CD4-positive, alpha-beta memory T cell (primary cell): ENCODE measurements at regions of chr4 and their contacts with region 1.

Region 1: DNA sequence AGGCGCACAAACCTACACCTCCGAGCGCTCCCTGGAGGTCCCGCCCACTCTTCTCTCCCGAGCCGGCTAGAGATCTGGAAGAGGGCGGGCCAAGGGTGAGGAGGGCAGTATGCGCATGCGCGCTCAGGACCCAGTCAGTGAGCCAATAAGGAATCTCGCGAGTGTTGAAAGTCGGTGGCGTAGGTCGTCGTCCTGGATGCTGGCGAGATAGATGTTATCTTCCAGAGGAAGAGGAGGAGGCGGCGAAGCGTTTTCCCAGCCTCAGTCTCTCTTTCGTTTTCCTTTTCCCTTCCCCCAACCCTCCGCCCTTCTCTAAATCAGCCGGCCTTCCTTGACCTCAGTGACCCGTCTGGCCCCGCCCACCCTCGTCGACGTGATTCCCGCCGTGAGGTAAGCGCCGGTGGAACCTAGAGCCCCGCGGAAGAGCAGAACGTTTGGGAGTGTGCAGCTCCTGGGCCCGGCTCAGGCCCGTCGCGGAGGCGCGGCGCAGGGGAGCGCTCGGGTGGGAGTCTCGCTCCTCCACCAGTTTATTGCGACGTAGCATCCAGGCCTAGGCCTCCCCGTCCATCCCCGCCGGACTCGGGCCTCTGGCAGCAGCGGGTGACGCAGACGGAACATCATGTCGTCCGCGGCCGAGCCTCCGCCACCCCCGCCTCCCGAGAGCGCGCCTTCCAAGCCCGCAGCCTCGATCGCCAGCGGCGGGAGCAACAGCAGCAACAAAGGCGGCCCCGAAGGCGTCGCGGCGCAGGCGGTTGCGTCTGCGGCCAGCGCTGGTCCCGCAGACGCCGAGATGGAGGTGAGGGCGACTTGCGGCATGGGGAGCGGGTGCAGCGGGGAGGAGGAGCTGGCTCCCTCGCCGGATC is at the start of gene SMARCA5:
- DNase-seq: peak; percentile 97 to 99 (median 98)
- H3K4me3 ChIP-seq: peak within 1 kb of the TSS; percentile 75 to 80
- H3K4me3 Mint-ChIP-seq: peak within 1 kb of the TSS; percentile 97 to 100 (median 99)
- H3K27ac ChIP-seq: peak within 1 kb of the TSS; percentile 96
- H3K27ac Mint-ChIP-seq: peak within 1 kb of the TSS; percentile 100
- H3K4me1 ChIP-seq: peaks cover 45% of the 10 kb centered on the region
- H3K4me1 Mint-ChIP-seq: peaks cover 24 to 55% (median 31%) of the 10 kb centered on the region in 4 donors
- H3K27me3 ChIP-seq: peaks cover 4% of the 10 kb centered on the region
- H3K27me3 Mint-ChIP-seq: peaks cover 2 to 5% of the 10 kb centered on the region in 2 donors
- total RNA-seq, gene SMARCA5: 59.3 to 61.2 TPM

Region 2: DNA sequence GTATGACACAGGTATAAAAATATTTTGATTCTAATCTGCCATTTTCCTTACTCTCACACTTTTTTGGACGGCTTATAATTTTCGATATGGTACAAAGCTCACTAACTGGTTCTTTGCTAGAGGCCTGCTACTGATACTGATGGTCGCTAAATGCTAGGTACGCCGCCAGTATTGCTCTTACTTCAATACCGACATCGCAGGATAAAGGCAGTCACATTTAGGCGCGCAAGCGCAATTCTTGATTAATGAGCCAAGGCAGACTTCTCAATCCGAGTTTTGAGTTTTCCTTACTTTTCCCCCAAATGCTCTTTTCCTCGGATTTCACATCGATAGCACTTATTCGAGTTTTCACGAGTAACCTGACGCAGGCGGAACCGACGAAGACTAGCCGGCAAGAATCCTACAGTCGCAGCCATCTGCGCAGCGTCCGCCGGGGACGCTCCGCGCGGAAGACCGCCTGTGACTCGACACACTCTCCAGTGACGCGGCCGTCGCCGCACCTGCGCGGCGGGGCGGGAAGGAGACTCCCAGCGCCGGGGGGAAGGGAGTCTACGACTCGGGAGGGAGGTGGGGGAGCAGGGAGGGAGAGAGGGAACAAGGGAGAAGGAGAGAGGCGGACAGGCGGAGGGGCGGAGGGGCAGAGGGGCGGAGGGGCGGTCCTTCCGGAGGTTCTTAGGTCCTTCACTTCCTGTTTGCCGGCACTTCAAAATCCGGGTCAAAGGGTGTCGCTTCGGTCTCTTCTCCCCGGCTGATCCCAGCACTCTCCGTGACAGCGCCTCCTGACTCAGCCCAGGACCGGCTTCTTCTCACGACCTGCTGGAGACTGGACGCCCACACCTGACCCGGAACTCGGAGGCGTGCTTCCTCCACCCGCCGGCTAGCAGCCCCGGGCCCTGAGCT is 329.1 kb before region 1 on chr4 and contains the start of gene USP38:
- CTCF ChIA-PET with region 1: no interaction called
- POLR2A ChIA-PET with region 1: no interaction called
- intact Hi-C with region 1: loop called (anchors 1 kb)
- DNase-seq: peak; percentile 83 to 94 (median 86)
- H3K4me3 ChIP-seq: peak within 1 kb of the TSS; percentile 59 to 79
- H3K4me3 Mint-ChIP-seq: peak within 1 kb of the TSS; percentile 87 to 96 (median 94)
- H3K27ac ChIP-seq: peak within 1 kb of the TSS; percentile 93
- H3K27ac Mint-ChIP-seq: peak within 1 kb of the TSS; percentile 95 to 99 (median 98)
- H3K4me1 ChIP-seq: peaks cover 49% of the 10 kb centered on the region
- H3K4me1 Mint-ChIP-seq: peaks cover 35 to 63% (median 49%) of the 10 kb centered on the region in 4 donors
- H3K27me3 ChIP-seq: no peaks in the 10 kb centered on the region
- H3K27me3 Mint-ChIP-seq: no peaks in the 10 kb centered on the region
- total RNA-seq, gene USP38: 25.8 to 26.4 TPM

Region 3: GRCh38 chr4:143399113-143399949 is 114.2 kb before region 1 on chr4:
- CTCF ChIA-PET with region 1: no interaction called
- POLR2A ChIA-PET with region 1: no interaction called
- intact Hi-C with region 1: loop called (anchors 1 kb)
- DNase-seq: peak in 4 of 5 donors; percentile 22 to 32 (median 31)
- H3K4me3 ChIP-seq: no peak overlapping the region
- H3K4me3 Mint-ChIP-seq: no peak overlapping the region
- H3K27ac ChIP-seq: no peak overlapping the region
- H3K27ac Mint-ChIP-seq: no peak overlapping the region
- H3K4me1 ChIP-seq: no peaks in the 10 kb centered on the region
- H3K4me1 Mint-ChIP-seq: peaks cover 0 to 10% (median 6%) of the 10 kb centered on the region in 4 donors
- H3K27me3 ChIP-seq: no peaks in the 10 kb centered on the region
- H3K27me3 Mint-ChIP-seq: peaks cover 6 to 8% of the 10 kb centered on the region in 2 donors

Region 4: DNA sequence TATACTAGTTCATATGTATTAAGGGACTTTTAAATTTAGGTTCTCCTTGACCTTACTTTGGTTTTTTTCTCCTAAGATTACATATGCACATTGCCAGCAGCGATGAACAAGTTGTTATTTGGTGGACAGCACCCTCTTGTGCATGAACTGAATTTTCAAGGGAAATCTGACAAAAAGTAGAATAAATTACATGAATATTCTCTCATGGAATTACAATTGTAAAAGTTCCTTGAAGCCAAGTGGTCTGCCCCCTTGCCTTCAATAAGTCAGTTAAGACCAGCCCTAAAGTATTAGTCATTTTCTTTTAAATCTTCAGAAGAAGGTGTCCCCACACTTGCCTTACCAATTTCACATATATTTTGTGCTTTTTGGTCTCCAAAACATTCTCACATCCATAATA is 30.7 kb before region 1 on chr4:
- CTCF ChIA-PET with region 1: no interaction called
- POLR2A ChIA-PET with region 1: no interaction called
- intact Hi-C with region 1: no loop called
- DNase-seq: no peak
- H3K4me3 ChIP-seq: no peak overlapping the region
- H3K4me3 Mint-ChIP-seq: no peak overlapping the region
- H3K27ac ChIP-seq: no peak overlapping the region
- H3K27ac Mint-ChIP-seq: no peak overlapping the region
- H3K4me1 ChIP-seq: no peaks in the 10 kb centered on the region
- H3K4me1 Mint-ChIP-seq: no peaks in the 10 kb centered on the region
- H3K27me3 ChIP-seq: peaks cover 5% of the 10 kb centered on the region
- H3K27me3 Mint-ChIP-seq: peaks cover 16 to 18% of the 10 kb centered on the region in 2 donors

Region 5: GRCh38 chr4:143524211-143524610 is 10.7 kb after region 1 on chr4:
- CTCF ChIA-PET with region 1: no interaction called
- POLR2A ChIA-PET with region 1: interaction called, 13 read pairs
- intact Hi-C with region 1: no loop called
- DNase-seq: no peak
- H3K4me3 ChIP-seq: no peak overlapping the region
- H3K4me3 Mint-ChIP-seq: no peak overlapping the region
- H3K27ac ChIP-seq: no peak overlapping the region
- H3K27ac Mint-ChIP-seq: no peak overlapping the region
- H3K4me1 ChIP-seq: peaks cover 21% of the 10 kb centered on the region
- H3K4me1 Mint-ChIP-seq: peaks cover 26 to 44% (median 37%) of the 10 kb centered on the region in 4 donors
- H3K27me3 ChIP-seq: no peaks in the 10 kb centered on the region
- H3K27me3 Mint-ChIP-seq: no peaks in the 10 kb centered on the region

Region 6: DNA sequence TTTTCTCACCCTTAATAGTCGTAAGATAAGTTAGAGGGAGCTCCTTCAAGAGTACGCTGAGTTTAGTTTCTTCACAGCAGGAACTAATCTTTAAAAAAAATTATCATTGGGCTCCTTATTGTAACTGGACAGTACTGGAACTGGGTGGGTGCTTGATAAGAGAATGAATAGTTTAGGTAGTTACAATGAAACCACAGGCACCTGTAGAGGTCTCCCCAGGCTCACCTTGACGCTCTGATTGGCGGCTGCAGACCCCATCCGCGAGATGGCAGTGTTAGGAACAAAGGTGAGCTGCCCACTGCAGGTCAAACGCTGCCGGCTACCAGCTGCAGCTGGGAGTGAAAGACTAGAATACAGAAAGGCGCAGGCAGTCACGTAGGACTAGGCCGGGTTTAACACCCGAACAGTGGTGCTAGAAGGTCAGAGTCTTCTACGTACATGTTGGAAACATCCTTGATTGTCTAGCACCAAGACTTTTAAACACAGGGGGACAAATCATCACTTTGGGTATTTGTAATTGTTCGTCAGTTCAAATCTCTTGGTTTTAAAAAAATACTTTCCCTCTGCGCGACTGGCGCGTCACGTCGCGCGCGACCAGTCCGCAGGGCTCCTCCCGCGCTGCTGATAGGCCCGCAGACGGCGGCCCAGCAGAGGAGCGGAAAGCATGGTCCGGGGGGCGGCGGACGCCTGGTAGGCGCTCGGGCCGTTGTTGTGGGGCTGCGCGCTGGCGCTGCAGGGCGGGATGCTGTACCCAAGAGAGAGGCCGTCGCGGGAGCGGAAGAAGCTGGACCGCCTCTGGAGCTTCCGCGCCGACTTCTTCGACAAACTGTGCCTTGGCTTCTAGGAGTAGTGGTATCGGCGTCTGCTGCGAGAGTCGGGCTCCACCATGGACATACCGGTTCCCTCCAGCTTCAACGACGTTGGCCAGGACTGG is 45.6 kb after region 1 on chr4:
- CTCF ChIA-PET with region 1: interaction called, 6 read pairs
- POLR2A ChIA-PET with region 1: interaction called, 13 read pairs
- intact Hi-C with region 1: loop called (anchors 1 kb)
- DNase-seq: peak; percentile 68 to 80 (median 77)
- H3K4me3 ChIP-seq: peak overlapping the region; percentile 64 to 78
- H3K4me3 Mint-ChIP-seq: peak overlapping the region; percentile 91 to 98 (median 95)
- H3K27ac ChIP-seq: peak overlapping the region; percentile 46
- H3K27ac Mint-ChIP-seq: peak overlapping the region; percentile 92 to 98 (median 97)
- H3K4me1 ChIP-seq: peaks cover 19% of the 10 kb centered on the region
- H3K4me1 Mint-ChIP-seq: peaks cover 10 to 29% (median 20%) of the 10 kb centered on the region in 4 donors
- H3K27me3 ChIP-seq: no peaks in the 10 kb centered on the region
- H3K27me3 Mint-ChIP-seq: no peaks in the 10 kb centered on the region